GM13977 (cell line): ENCODE measurements at regions of chr12 and their contacts with region 1.

Region 1: GRCh38 chr12:46372544-46373110 is at the start of gene SLC38A2:
- DNase-seq: peak; percentile 99
- CTCF ChIP-seq: no peak

Region 2: GRCh38 chr12:46661110-46661845 is 288.7 kb after region 1 on chr12:
- in situ Hi-C with region 1: loop called (anchors 25 kb)
- DNase-seq: peak; percentile 49
- CTCF ChIP-seq: peak; percentile 74